ENCODE measurements at regions of chr20 and their contacts with region 1.

Region 1: GRCh38 chr20:50153485-50154377 is at the start of gene PEDS1:
- DNase-seq: peak; percentile 95 to 99
- H3K4me3 ChIP-seq: peak within 1 kb of the TSS; percentile 96
- H3K4me3 Mint-ChIP-seq: peak within 1 kb of the TSS; percentile 82
- H3K27ac Mint-ChIP-seq: peak within 1 kb of the TSS; percentile 91
- H3K4me1 ChIP-seq: peaks cover 32% of the 10 kb centered on the region
- H3K4me1 Mint-ChIP-seq: peaks cover 45% of the 10 kb centered on the region
- H3K27me3 ChIP-seq: no peaks in the 10 kb centered on the region
- H3K27me3 Mint-ChIP-seq: no peaks in the 10 kb centered on the region
- CTCF ChIP-seq: peak; percentile 0 to 5
- total RNA-seq, gene PEDS1: 78.3 and 84.1 TPM in 2 replicates

Region 2: DNA sequence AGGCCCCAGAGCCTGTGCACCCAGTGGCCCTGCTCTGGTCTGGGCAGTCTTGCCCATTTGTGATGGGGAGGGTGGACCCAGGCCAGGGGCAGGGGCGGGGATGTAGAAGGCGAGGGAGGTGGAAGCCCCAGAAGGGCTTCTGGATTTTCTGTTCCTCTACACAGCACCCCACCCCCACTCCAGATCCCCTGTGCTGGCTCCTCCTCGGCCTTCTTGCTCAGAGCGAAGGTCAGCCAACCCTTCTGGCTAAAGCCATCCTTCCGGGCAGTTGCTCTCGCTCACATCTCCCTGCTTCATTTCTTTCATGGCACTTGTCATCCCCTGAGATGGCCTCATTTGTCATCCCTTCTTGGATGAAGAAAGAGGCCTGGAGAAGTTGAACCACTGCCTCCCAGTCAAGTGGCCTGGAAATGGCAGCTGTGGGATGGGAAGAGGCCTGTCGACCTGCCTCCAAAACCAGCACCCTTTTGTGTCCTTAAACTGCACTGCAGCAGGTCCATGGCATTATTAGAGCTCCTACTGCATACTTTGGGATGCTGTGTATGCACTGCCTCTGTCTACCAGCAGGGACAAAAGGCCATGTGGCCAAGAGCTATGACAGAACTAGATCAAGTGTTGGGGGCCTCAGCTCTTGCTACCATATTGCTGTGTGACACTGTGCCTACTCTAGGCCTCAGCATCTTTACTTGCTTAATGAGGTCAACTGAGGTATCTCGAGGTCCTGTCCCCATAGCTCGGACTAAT is 20.1 kb before region 1 on chr20:
- CTCF ChIA-PET with region 1: interaction called, 19 read pairs
- POLR2A ChIA-PET with region 1: interaction called, 7 read pairs
- intact Hi-C with region 1: no loop called
- DNase-seq: no peak
- H3K4me3 ChIP-seq: no peak overlapping the region
- H3K4me3 Mint-ChIP-seq: no peak overlapping the region
- H3K27ac Mint-ChIP-seq: no peak overlapping the region
- H3K4me1 ChIP-seq: peaks cover 26% of the 10 kb centered on the region
- H3K4me1 Mint-ChIP-seq: peaks cover 7% of the 10 kb centered on the region
- H3K27me3 ChIP-seq: no peaks in the 10 kb centered on the region
- H3K27me3 Mint-ChIP-seq: no peaks in the 10 kb centered on the region
- CTCF ChIP-seq: peak; percentile 31 to 56

Region 3: DNA sequence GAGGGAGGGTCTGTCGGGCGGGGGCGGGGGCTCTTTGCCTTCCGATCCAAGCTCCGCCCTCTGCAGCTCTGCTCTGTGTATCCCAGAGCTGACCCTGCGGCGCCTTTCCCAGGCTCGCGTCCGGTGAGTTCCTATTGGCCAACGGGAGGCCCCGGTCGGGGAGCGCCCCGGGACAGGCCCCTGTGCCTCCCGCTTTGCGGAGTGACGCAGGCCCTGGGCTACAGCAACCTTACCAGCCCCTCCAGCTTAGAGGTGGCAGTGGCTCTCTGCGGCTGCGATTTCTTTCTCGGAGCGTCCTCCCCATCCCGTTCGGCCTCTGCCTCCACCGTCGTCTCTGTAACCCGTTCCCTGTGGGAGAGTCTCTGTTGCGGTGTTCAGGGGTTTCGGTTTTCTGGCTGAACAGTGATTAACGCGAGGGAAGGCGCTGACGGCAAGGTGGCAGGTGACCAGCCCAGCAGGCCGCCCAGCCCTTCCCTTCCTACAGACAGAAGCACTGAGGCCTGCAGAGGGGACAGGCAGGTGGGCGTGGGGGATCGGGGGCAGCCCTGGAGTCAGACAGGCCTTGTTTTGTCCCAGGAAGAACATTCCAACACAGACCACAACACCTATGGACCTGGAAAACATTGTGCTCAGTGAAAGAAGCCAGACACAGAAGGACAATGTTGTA is 18.7 kb after region 1 on chr20:
- CTCF ChIA-PET with region 1: interaction called, 106 read pairs
- POLR2A ChIA-PET with region 1: interaction called, 142 read pairs
- intact Hi-C with region 1: no loop called
- DNase-seq: peak; percentile 99
- H3K4me3 ChIP-seq: peak overlapping the region; percentile 47
- H3K4me3 Mint-ChIP-seq: peak overlapping the region; percentile 70
- H3K27ac Mint-ChIP-seq: peak overlapping the region; percentile 48
- H3K4me1 ChIP-seq: peaks cover 18% of the 10 kb centered on the region
- H3K4me1 Mint-ChIP-seq: peaks cover 13% of the 10 kb centered on the region
- H3K27me3 ChIP-seq: no peaks in the 10 kb centered on the region
- H3K27me3 Mint-ChIP-seq: no peaks in the 10 kb centered on the region
- CTCF ChIP-seq: peak in 1 of 2 experiments; percentile 0